ENCODE measurements at regions of chr14 and their contacts with region 1.

Region 1: GRCh38 chr14:105760691-105761346 is 234.4 kb downstream of the TMEM121 start:
- DNase-seq: peak in 2 of 3 donors; percentile 8 to 16
- ATAC-seq: peak; percentile 42 to 47
- H3K4me3 ChIP-seq: no peak overlapping the region
- H3K27ac ChIP-seq: no peak overlapping the region
- H3K4me1 ChIP-seq: no peaks in the 10 kb centered on the region
- H3K27me3 ChIP-seq: no peaks in the 10 kb centered on the region

Region 2: DNA sequence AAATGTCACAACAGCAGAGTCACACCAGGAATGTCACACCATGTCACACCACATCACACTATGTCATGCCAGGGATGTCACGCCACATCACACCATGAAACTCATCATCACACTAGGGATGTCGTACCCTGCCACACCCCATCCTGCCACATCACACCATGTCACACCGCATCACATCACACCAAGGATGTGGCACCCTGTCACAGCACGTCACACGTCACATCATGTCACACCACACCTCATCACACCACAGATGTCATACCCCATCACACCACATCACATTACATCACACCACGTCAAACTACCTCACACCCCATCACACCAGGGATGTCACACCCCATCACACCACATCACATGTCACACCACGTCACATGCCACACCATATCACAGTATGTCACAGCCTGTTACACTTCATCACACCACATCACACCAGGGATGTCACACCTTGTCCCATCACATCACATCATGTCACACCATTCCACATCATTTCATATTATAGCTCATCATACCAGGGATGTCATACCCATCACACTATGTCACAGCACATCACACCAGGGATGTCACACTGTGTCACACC is 143.5 kb before region 1 on chr14:
- intact Hi-C with region 1: loop called (anchors 2 to 10 kb)
- DNase-seq: no peak
- ATAC-seq: peak; percentile 42 to 53
- H3K4me3 ChIP-seq: no peak overlapping the region
- H3K27ac ChIP-seq: no peak overlapping the region
- H3K4me1 ChIP-seq: no peaks in the 10 kb centered on the region
- H3K27me3 ChIP-seq: no peaks in the 10 kb centered on the region